Heart left ventricle (tissue), 16 donors: ENCODE measurements at regions of chr1 and their contacts with region 1.

Region 1: DNA sequence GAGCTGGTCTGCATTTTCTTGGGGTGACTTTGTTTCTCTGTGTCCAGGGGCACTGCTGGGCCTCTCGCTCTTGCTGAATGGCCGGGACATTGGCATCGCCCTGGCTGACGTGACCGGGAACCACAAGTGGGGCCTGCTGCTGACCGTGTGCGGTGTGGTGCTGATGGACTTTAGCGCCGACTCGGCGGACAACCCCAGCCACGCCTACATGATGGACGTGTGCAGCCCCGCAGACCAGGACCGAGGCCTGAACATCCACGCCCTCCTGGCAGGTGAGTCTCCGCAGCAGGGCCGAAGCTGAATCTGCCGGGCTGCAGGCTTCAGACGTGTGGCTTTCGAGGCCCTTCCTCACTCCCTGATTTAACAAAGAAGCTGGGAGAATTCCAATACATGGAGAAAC is 7.9 kb downstream of the SLC45A1 start:
- DNase-seq: no peak
- ATAC-seq: no peak
- H3K4me3 ChIP-seq: no peak overlapping the region
- H3K27ac ChIP-seq: no peak overlapping the region
- H3K4me1 ChIP-seq: peaks cover 0 to 16% (median 6%) of the 10 kb centered on the region in 12 donors
- H3K27me3 ChIP-seq: no peaks in the 10 kb centered on the region
- CTCF ChIP-seq: no peak
- POLR2A ChIP-seq: no peak

Region 2: DNA sequence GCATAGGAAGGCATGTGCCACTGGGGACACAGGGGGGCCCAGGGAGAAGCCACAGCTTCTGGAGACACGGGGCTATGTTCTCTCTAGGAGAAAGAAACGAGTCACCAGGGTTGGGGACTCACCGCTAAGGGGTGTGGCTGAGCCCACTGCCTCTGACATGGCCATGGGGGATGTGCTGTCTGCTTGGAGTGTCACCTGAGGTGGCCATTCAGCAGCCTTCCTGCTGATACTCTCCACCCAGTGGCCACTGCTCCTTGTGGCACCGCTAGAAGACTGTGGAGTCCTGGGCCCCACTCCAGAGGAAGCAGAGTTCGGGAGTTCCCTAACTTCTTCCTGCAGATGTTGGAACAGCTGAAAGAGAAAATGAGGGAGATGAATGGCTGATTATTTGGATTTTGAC is 99.0 kb before region 1 on chr1:
- intact Hi-C with region 1: no loop called
- DNase-seq: no peak
- ATAC-seq: no peak
- H3K4me3 ChIP-seq: no peak overlapping the region
- H3K27ac ChIP-seq: no peak overlapping the region
- H3K4me1 ChIP-seq: peaks cover 0 to 14% (median 0%) of the 10 kb centered on the region in 12 donors
- H3K27me3 ChIP-seq: no peaks in the 10 kb centered on the region
- CTCF ChIP-seq: no peak
- POLR2A ChIP-seq: no peak

Region 3: GRCh38 chr1:8343464-8344001 is 17.8 kb after region 1 on chr1:
- intact Hi-C with region 1: loop called in 1 of 10 experiments (anchors 2 kb)
- DNase-seq: peak in 2 of 5 donors; percentile 77 to 78
- ATAC-seq: peak; percentile 45 to 77 (median 70)
- H3K4me3 ChIP-seq: peak overlapping the region in 3 of 12 donors; percentile 23 to 37 (median 29)
- H3K27ac ChIP-seq: peak overlapping the region in 10 of 12 donors; percentile 2 to 79 (median 46)
- H3K4me1 ChIP-seq: peaks cover 0 to 15% (median 6%) of the 10 kb centered on the region in 12 donors
- H3K27me3 ChIP-seq: no peaks in the 10 kb centered on the region
- CTCF ChIP-seq: no peak
- POLR2A ChIP-seq: no peak

Region 4: DNA sequence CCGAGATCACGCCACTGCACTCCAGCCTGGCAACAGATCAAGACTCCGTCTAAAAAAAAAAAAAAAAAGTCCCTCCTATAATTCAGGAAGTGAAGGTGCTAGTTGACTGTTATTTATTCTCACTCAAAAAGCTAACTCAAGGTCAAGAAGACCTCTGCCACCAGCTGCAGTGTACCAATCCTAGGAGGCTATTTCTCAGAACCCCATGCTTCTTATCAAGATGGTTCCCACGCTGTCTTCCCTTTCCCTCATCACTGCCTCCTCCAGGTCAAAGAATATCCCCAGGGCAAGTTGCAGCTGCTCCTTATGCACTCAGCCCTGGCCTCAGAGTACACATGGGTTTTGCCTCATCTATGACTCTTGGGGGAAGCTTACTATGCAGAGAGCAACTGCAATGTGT is 438.1 kb after region 1 on chr1:
- intact Hi-C with region 1: no loop called
- DNase-seq: peak in 1 of 5 donors; percentile 13
- ATAC-seq: peak in 2 of 4 donors; percentile 36 to 63
- H3K4me3 ChIP-seq: no peak overlapping the region
- H3K27ac ChIP-seq: no peak overlapping the region
- H3K4me1 ChIP-seq: peaks cover 0 to 16% (median 9%) of the 10 kb centered on the region in 12 donors
- H3K27me3 ChIP-seq: no peaks in the 10 kb centered on the region
- CTCF ChIP-seq: no peak
- POLR2A ChIP-seq: no peak